Sciatic nerve (tissue), 2 donors: ENCODE measurements at regions of chr18 and their contacts with region 1.

Region 1: GRCh38 chr18:7805880-7806279 is 238.8 kb downstream of the PTPRM start:
- DNase-seq: no peak
- ATAC-seq: no peak

Region 2: DNA sequence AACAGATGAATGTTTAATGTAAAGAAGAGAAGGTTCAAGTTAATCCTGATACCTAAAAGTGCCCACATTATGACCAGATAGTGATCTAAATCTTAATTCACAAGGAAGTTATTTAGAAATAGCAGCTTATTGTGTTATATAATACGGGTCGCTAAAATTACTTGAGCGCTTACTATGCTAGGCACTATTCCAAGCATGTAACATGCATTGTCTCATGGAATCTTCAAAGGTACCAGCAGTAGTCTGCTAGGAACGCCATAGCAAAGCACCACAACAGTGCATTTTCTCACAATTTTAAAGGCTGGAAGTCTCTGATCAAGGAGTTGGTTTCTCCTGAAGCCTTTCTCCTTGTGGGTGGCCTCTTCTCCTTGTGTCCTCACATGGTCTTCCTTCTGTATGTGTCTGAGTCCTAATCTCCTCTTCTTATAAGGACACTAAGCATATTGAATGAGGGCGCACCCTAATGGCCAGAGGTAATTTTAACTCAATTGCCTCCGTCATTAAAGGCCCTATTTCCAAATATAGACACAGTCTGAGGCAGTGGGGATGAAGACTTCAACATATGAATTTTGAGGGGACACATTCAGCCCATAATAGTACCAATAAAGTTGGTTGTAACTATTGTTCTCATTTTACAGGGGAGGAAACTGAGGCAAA is 456.6 kb before region 1 on chr18:
- intact Hi-C with region 1: loop called (anchors 10 kb)
- DNase-seq: no peak
- ATAC-seq: no peak